ENCODE measurements at regions of chr2 and their contacts with region 1.

Region 1: GRCh38 chr2:168920504-168921157 is 19.5 kb downstream of the G6PC2 start:
- DNase-seq: no peak
- H3K4me3 ChIP-seq: no peak overlapping the region
- H3K27ac ChIP-seq: no peak overlapping the region
- H3K4me1 ChIP-seq: no peaks in the 10 kb centered on the region
- H3K27me3 ChIP-seq: peaks cover 0 to 7% (median 0%) of the 10 kb centered on the region in 7 donors
- CTCF ChIP-seq: peak in 10 of 11 experiments; percentile 26 to 75 (median 54)
- POLR2A ChIP-seq: no peak

Region 2: DNA sequence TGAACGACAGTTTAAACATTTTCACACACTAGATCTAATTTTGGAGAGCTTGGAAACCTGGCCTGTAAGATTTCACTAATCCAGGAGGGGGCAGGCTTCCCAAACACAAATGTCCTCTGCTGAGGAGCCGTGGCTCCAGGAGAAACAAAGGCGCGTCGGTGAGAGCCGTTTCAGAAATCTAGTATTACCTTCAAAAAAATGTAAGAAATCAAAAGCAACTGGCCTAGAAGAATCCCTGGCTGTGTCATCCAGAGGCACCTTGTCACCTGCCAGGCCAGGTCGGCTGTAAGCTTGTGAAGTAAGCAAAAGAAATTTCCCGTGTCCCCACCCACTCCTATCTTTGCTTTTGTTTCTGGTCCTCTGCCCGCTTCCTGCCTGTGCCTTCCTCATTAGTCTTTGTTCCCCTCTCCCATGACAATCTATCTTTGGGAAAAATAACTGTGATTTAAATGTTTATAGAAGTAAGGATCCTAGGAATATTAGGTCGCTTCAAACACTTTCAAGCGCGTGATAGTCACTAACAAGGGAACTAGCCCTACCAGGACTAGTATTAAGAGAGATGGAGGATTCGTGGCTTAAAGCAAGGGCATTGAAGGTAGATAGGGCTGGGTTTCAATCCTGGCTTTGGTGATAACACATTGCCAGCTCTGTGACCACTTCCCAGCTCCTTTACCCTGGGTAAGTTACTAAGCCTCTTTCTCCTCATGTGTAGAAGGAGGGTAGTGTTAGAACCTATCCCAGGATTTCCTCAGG is 573.7 kb before region 1 on chr2:
- intact Hi-C with region 1: loop called (anchors 5 kb)
- DNase-seq: peak; percentile 79
- H3K4me3 ChIP-seq: peak overlapping the region; percentile 14 to 64 (median 24)
- H3K27ac ChIP-seq: no peak overlapping the region
- H3K4me1 ChIP-seq: peaks cover 0 to 25% (median 5%) of the 10 kb centered on the region in 6 donors
- H3K27me3 ChIP-seq: peaks cover 0 to 11% (median 0%) of the 10 kb centered on the region in 7 donors
- CTCF ChIP-seq: peak; percentile 66 to 88 (median 83)
- POLR2A ChIP-seq: no peak

Region 3: DNA sequence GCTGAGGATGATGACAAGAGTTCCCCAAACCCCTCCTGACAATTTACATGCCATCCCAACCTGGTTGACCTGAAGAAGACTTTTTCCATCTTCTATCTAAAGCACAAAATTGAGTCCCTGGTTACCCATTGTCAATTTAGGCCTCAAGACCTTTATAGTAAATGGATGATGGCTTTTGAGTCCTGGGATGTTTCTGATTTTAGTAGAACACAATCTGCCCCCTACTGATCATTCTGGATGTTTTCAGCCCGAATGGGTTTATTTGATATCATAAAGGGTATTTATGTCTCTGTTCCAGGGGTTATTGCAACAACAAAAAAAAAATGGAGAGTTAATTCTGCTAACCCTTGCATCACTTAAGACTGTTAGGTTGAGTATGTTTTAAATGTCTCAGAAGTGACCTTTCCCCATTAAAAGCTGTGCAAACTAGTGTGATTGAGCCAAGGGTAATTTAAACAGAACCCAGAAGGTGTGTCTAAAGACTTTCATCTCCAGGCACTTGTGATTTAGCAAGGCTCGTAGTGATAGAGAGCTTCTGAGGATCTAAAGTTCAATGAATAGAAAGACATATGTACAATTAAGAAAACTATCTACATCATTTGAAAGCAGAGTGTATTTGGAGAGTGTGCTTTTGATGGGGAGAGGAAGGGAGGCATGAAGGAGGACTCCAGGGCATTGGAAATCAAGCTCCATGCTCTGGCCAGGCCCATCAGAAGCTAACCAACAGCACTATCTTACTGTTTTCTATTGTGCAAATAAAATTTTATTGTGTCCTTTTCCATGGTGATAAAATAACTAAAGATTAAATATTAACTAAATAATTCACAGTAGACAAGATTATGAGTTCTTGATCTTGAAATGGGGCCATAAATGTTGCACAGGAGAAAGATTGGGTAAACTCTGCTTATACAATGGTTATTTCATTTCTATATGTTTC is 214.8 kb before region 1 on chr2:
- intact Hi-C with region 1: no loop called
- DNase-seq: no peak
- H3K4me3 ChIP-seq: no peak overlapping the region
- H3K27ac ChIP-seq: no peak overlapping the region
- H3K4me1 ChIP-seq: no peaks in the 10 kb centered on the region
- H3K27me3 ChIP-seq: no peaks in the 10 kb centered on the region
- CTCF ChIP-seq: peak in 3 of 11 experiments; percentile 15 to 37 (median 28)
- POLR2A ChIP-seq: no peak

Region 4: DNA sequence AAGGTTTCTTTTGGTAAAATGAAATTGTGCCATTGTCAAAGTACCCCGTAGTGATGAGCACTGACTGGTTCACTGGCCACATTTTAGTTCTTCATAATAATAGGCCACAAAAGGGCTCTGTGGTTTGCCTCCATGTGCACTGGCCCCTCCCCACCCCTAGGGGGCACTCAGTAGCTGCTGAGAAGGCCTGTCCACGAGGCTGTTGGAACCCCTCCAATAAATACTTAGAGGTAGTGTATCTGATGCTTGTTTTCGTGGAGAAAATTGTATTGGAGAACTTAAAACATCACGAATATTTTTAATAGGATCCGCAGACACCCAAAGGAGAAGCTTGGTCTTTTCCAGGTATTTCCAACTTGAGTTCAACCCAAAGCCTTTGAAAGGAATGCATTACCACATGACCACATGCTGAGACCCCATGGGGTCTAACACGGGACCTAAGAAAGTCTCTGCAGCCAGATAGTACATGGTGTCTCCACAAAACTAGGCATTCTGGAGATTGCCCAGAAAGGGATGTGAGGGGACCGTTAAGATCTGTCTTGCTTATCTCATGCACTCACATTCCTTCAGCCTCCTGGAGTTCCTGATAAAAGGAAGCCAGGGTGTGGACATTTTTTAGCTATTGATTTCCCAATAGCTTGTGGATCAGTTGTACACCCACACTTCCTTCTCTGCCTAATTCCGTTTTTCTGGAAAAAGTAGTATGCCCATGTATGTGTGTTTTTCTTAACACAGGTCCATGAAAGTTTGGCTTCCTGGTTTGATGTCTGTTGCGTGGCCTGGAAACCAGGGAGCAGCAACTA is 146.7 kb before region 1 on chr2:
- intact Hi-C with region 1: loop called (anchors 5 kb)
- DNase-seq: no peak
- H3K4me3 ChIP-seq: no peak overlapping the region
- H3K27ac ChIP-seq: no peak overlapping the region
- H3K4me1 ChIP-seq: no peaks in the 10 kb centered on the region
- H3K27me3 ChIP-seq: no peaks in the 10 kb centered on the region
- CTCF ChIP-seq: peak; percentile 27 to 81 (median 70)
- POLR2A ChIP-seq: no peak

Measured in spleen (tissue), 13 donors.